Dorsolateral prefrontal cortex (tissue), 120 donors: ENCODE measurements at regions of chr12 and their contacts with region 1.

Region 1: DNA sequence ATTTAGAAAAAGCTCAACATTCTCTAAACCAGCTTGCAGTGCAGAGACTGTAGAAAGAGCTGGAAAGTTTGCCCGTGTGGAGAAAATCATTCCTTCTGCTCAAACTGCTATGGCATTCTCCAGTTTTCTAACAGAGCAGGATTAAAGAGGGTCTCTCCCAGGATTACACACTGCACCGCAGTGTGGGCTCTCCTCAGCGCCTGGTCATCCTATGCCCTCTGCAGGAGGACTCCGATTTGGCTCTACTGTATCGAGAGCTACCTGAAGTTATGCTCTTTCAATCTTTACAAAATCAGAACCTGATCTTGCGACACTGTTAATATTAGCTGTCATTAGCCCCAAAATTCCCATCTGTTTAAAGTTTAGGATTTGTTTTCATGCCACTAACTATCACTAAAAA is 33.0 kb downstream of the BHLHE41 start:
- DNase-seq: peak in 1 of 10 donors; percentile 47
- H3K4me3 ChIP-seq: peak overlapping the region in 1 of 59 donors; percentile 16
- H3K27ac ChIP-seq: no peak overlapping the region
- H3K27me3 ChIP-seq: no peaks in the 10 kb centered on the region
- CTCF ChIP-seq: peak in 52 of 56 donors; percentile 17 to 75 (median 44)

Region 2: DNA sequence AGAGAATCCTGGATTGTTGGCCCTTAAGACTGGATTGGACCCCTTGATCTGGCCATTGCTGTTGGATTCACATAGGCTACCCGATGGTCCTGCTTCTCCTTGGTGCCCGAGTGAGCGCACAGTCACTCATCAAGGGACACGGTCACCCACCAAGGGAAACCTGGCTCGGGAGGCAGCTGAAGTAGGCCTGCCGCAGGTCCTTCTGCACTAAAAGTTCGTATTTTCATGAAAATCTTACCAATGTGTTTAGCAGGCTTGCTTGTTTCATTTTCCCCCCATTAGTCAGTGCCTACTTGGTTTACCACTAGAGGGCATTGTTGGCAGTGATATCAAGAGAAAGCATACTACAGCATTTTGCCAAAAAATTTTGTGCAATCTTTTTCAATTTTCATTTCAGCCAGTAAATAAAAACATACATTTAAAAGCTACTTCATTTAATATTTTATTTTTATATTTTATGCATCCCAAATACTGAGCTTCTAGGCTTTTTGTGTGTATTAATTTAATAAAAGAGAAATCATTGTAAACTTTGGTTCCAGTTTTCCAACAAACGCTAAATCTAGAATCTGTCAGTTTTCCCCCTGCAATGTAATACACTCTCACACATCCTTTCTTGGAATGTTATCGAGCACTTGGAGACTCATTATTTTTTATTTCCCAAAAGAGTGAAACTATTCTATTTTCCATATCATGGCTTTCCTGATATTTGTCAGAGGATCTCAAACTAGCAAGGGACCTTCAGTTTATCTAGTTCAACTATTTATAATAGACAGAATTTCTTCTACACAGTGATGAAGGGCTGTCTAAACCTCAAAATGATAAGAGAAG is 655.4 kb before region 1 on chr12:
- intact Hi-C with region 1: loop called in 1 of 2 experiments (anchors 5 kb)
- DNase-seq: peak in 4 of 10 donors; percentile 3 to 53 (median 32)
- H3K4me3 ChIP-seq: peak overlapping the region in 58 of 59 donors; percentile 15 to 68 (median 51)
- H3K27ac ChIP-seq: peak overlapping the region in 22 of 59 donors; percentile 11 to 79 (median 40)
- H3K27me3 ChIP-seq: no peaks in the 10 kb centered on the region
- CTCF ChIP-seq: peak; percentile 74 to 94 (median 86)

Region 3: DNA sequence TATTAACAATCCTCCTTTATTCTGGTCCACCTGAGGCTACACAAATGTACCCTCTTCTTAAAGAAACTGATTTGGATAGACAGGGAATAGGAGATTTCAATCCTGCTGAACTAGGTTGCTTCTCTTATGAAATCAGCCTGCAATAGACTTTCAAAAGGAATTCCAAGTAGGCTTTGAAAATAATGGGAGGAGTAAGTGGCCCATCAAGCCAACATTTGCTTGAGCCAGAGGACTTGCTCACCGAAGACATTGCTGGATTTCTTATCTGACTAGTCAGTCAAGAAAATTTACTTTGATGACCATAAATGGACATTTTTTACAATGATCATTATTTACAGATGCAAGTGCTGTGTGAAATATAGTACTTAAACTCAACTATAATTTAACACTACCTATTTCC is 216.2 kb before region 1 on chr12:
- intact Hi-C with region 1: no loop called
- DNase-seq: no peak
- H3K4me3 ChIP-seq: no peak overlapping the region
- H3K27ac ChIP-seq: no peak overlapping the region
- H3K27me3 ChIP-seq: peaks cover 0 to 9% (median 0%) of the 10 kb centered on the region in 45 donors
- CTCF ChIP-seq: no peak

Region 4: GRCh38 chr12:26153421-26154154 is 61.8 kb after region 1 on chr12:
- intact Hi-C with region 1: no loop called
- DNase-seq: no peak
- H3K4me3 ChIP-seq: no peak overlapping the region
- H3K27ac ChIP-seq: no peak overlapping the region
- H3K27me3 ChIP-seq: no peaks in the 10 kb centered on the region
- CTCF ChIP-seq: peak in 5 of 56 donors; percentile 8 to 35 (median 21)

Region 5: DNA sequence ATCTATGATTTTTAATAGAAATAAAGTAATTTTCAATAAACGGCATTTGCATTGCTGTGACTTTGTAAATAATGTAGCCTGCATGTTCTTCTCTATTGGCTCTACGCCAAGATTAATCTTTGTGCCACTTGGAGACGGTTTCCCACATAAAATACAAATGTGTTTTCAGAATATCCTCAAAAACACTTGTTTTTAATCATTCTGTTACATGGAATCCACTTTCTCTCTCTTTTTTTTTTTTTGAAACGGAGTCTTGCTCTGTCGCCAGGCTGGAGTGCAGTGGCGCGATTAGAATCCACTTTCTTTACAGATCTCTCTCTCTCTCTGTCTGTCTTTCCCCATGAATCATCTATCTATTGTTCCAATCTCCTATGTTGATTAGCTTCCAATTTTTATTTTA is 80.7 kb after region 1 on chr12:
- intact Hi-C with region 1: no loop called
- DNase-seq: no peak
- H3K4me3 ChIP-seq: peak overlapping the region in 31 of 59 donors; percentile 1 to 45 (median 24)
- H3K27ac ChIP-seq: peak overlapping the region in 10 of 59 donors; percentile 1 to 59 (median 24)
- H3K27me3 ChIP-seq: peaks cover 0 to 2% (median 0%) of the 10 kb centered on the region in 45 donors
- CTCF ChIP-seq: no peak